Psoas muscle (tissue), 8 donors: ENCODE measurements at regions of chr10 and their contacts with region 1.

Region 1: DNA sequence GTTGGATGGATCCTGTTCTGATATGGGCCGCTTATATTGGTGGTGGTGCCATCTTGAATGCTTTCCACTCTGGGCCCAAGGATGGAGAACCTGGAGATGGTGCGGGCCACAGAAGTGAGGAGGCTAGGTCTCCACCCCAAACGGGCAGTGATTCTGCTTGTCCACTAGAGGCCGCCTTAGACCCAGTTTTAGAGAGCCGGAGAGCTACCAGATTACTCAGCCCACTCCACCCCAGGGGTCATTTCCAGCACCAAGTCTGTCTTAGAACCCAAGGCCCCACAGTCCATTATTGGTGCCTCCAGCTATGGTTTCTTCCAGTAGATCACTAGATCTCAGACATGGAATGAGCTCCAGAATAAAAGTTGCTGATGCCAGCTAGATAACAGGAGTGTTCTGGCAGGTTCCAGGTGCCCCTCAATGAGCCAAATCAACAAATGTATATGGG is 11.8 kb upstream of the CAMK2G start:
- DNase-seq: peak; percentile 66 to 78
- ATAC-seq: peak; percentile 60 to 77 (median 70)
- H3K4me3 ChIP-seq: no peak overlapping the region
- H3K27ac ChIP-seq: peak overlapping the region; percentile 96
- H3K4me1 ChIP-seq: peaks cover 28% of the 10 kb centered on the region
- H3K27me3 ChIP-seq: no peaks in the 10 kb centered on the region
- CTCF ChIP-seq: peak; percentile 83

Region 2: GRCh38 chr10:73827346-73828089 is 58.6 kb before region 1 on chr10:
- intact Hi-C with region 1: no loop called
- DNase-seq: no peak
- ATAC-seq: no peak
- H3K4me3 ChIP-seq: no peak overlapping the region
- H3K27ac ChIP-seq: no peak overlapping the region
- H3K4me1 ChIP-seq: no peaks in the 10 kb centered on the region
- H3K27me3 ChIP-seq: no peaks in the 10 kb centered on the region
- CTCF ChIP-seq: no peak

Region 3: DNA sequence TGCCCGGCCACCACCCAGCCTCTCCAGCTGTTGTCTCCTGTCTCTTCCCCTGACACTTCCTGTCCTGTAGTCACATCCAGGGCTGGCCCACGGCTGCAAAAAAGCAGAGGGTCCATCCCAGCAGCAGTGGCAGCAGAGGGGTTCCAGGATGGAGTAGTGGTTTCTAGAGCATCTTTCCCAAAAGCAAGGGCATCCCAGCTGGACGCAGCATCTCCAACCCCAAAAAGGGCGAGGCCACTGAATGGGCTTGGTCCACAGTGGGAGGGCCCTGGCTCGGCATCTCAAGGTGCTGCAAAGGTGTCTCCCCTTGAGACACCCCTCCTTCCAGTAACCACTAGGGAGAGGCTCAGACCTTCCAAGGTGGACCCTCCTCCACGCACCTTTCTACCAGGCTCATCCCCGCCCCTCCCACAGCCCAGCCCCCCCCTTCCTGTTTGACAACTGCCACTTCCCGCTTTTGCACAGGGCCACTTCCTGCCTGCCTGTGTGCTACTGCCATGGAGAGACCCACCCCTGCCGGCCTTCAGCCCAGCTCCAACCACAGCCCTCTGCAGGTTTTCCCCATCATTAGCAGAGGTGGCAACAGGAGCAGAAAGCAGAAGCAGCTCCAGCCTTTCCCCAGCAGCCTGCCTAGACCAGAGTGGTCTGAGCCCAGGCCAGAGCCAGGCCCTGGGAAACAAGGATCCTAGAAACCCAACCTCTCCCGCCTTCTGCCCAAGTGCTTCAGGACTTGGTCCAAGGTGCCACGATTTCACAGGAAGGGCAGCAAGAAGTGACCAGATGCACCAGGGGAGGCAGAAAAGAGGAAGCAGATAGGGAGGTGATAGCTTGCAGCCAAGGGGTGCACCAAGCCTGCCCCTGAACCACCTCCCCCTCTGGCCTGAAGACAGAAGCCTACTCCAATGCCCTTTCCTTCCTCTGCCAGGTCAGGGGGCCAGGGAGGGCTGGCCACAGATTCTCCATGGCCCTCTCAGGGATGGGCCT is 20.4 kb before region 1 on chr10:
- intact Hi-C with region 1: no loop called
- DNase-seq: no peak
- ATAC-seq: peak in 2 of 4 donors; percentile 18 to 20
- H3K4me3 ChIP-seq: no peak overlapping the region
- H3K27ac ChIP-seq: peak overlapping the region; percentile 67
- H3K4me1 ChIP-seq: peaks cover 65% of the 10 kb centered on the region
- H3K27me3 ChIP-seq: no peaks in the 10 kb centered on the region
- CTCF ChIP-seq: no peak

Region 4: DNA sequence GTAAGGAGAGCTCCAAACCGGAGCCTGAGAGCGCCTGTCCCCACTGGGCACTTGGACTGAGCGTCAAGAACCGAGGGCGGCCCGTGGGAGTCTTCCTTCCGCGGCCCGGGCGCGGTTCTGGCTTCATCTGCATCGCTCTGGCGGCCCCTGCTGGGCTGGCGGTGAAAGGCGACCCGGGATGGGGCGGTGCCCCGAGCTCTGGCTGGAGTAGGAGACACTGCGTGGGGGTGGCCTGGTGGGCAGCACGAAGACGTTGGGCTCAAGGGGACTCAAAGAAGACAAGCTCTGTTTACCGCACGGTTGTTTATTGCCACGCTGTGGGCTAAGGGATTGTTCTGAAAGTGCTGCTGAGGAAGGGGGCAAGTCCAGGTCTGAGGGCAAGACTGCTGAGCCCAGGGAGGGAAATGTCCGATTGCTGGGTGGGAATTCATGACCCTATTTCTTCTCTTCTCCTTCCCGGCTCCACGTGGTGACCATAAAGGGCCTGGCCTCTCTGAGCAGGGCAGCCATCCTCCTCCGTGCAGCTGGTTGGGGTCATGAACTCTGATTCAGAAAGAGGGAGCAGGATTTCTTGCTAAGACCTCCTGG is 54.6 kb after region 1 on chr10:
- intact Hi-C with region 1: loop called (anchors 1 to 2 kb)
- DNase-seq: peak; percentile 90 to 95
- ATAC-seq: peak; percentile 92 to 97 (median 94)
- H3K4me3 ChIP-seq: peak overlapping the region; percentile 13
- H3K27ac ChIP-seq: peak overlapping the region; percentile 93
- H3K4me1 ChIP-seq: peaks cover 19% of the 10 kb centered on the region
- H3K27me3 ChIP-seq: no peaks in the 10 kb centered on the region
- CTCF ChIP-seq: peak; percentile 93

Region 5: DNA sequence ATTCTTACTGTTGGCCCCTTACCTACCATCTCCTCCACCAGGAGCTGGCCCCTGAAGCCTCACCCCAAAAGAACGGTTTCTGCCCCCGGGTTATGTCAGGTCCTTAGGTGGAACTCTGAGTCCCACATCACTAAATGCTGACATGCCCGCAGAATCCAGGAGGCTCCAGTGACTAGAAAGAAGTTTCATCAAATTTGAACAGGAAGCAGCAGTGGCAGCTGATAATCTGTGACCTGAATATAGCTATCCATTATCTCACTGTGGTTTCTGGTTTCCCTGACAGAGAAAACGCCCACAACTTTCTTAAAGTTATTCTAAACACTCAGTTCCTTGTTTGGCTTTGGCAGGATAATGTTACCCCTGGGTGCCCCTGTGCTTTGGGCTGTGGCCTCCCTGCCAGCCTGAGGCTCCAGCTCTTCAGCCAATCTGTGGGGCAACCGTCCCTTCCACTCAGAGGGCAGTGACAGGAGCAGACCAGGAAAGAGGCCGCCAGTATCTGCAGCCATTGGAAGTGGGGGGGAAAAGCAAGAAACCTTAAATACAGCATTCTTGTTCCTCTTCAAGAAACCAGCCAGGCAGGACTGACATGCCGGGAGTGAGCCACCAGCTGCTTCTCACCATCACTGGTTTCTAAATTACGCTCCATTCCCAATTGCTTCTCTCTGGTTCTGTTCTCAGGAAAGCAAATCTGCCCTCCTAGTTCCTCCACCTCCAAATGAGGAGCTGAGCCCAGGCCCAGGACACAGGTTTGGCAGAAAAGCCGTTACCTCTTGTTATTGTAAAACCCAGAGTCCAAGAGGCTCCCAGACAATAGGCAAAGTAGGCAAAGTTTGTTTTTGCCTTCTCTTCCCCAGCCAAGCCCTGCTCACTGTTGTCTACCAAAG is 70.6 kb after region 1 on chr10:
- intact Hi-C with region 1: loop called in 1 of 2 experiments (anchors 5 kb)
- DNase-seq: no peak
- ATAC-seq: peak; percentile 75 to 85 (median 84)
- H3K4me3 ChIP-seq: peak overlapping the region; percentile 18
- H3K27ac ChIP-seq: peak overlapping the region; percentile 82
- H3K4me1 ChIP-seq: peaks cover 11% of the 10 kb centered on the region
- H3K27me3 ChIP-seq: no peaks in the 10 kb centered on the region
- CTCF ChIP-seq: no peak

Region 6: DNA sequence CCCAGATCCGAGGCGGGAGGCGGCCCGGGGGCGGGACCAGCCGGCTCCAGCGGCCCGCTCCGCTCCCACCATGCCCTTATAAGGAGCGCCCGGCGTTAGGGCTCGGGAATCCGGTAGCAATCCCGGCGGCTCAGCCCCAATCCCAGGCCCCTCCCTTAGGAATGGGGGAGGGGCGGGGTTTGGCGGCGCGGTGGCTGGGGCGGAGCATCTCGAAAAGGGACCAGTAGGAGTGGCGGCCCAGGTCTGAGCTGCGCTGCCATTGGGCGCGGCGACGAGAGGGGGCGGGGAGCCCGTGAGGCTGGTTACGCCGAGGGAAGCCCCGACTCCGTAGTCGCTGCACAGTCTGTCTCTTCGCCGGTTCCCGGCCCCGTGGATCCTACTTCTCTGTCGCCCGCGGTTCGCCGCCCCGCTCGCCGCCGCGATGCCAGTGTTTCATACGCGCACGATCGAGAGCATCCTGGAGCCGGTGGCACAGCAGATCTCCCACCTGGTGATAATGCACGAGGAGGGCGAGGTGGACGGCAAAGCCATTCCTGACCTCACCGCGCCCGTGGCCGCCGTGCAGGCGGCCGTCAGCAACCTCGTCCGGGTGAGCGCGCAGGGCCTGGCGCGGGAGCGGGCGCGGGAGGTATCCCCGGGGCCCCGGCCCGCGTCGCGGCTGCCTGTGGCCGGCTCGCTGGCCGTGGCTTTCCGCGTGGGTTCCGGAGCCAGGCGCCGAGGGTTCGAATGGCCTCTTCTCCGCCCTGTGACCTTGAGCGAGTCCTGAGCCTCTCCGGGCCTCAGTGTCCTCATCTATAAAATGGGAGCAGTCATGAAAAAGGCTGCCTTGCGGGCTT is 111.9 kb after region 1 on chr10 and contains the start of gene VCL:
- intact Hi-C with region 1: loop called in 1 of 2 experiments (anchors 5 kb)
- DNase-seq: peak; percentile 98 to 99
- ATAC-seq: peak; percentile 93 to 96 (median 96)
- H3K4me3 ChIP-seq: peak within 1 kb of the TSS; percentile 95
- H3K27ac ChIP-seq: peak within 1 kb of the TSS; percentile 97
- H3K4me1 ChIP-seq: peaks cover 35% of the 10 kb centered on the region
- H3K27me3 ChIP-seq: no peaks in the 10 kb centered on the region
- CTCF ChIP-seq: no peak
- total RNA-seq, gene VCL: 89.1 to 426 (median 179) TPM

Region 7: DNA sequence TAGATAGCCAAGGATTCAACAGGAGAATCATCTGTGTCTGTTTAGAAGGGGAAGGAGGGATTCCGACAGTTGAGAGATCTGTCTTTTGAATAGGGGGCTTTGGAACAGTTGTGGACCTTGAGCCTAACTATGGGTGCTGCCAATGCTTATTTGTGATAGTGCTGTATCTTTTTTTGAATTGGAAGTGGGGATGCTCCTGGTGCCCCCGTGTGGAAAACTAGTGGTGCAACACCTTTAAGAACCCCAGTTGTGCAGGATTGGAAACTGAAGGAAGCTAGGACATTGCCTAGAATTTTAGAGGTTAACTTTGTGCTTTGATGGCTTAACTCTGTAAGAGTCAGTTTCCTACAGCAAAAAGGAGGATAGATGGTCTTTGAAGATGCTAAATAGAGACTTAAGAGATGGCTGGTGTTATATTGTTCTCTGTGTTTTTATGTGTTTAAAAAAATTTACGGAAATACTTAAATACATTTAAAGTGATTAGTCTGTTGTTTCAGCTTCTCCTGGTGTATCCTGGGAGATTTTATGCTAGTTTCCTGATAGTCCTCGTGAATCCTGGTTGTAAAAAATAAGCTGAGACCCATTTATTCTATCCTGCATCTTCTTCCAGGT is 195.2 kb after region 1 on chr10:
- intact Hi-C with region 1: loop called (anchors 1 to 5 kb)
- DNase-seq: no peak
- ATAC-seq: peak; percentile 51 to 62 (median 56)
- H3K4me3 ChIP-seq: no peak overlapping the region
- H3K27ac ChIP-seq: peak overlapping the region; percentile 52
- H3K4me1 ChIP-seq: peaks cover 32% of the 10 kb centered on the region
- H3K27me3 ChIP-seq: no peaks in the 10 kb centered on the region
- CTCF ChIP-seq: peak; percentile 74